Common myeloid progenitor, CD34-positive (primary cell): ENCODE measurements at regions of chr10 and their contacts with region 1.

Region 1: DNA sequence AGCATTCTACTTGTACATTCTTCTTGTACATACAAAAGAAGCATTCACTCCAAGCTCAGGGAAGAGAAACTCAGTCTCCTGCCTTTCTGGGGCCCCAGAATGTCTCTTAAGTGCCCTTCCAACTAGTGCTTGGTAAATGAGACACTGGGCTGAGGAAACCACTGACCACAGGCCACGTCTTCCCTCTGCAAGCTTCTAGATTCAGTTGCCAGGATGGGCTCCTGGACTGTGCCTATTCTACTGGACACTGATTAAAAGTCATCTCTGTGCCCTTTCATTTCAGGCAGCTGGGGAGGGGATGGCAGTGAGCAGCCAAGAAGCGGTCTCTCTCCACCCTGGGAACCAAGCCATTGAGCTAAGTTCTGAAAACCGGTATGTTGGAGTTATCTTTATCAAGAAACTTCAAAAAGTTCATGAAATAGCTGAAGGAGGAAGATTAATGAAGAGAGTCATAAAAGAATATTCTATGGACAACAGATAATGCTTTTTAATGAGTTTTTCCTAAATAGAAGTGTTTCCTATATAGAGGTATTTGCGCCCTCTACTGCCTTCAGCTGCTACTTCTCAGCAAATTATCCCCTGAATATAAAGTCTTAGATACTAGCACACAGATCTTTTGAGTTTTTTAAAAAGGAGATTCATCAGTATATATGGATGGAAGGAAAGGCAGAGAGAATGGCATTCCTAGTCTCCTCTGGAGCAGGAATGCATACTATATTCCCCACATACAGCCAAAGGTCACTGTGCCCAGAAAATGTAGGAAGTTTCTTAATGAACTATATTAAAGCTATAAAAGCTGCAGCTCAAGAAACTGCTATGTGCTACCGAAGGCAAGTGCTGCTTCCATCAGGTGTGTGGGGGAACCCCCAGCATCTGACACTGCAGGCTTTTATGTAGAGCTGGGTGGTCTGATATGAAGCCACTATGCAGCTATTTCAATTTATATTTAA is 8.4 kb upstream of the IFIT1B start:
- DNase-seq: peak in 2 of 3 donors; percentile 54 to 55
- H3K4me3 ChIP-seq: peak overlapping the region in 1 of 7 experiments; percentile 11
- H3K27ac ChIP-seq: no peak overlapping the region
- H3K4me1 ChIP-seq: peaks cover 10 to 41% (median 19%) of the 10 kb centered on the region in 4 experiments
- H3K27me3 ChIP-seq: no peaks in the 10 kb centered on the region

Region 2: GRCh38 chr10:89295597-89295996 is 73.8 kb before region 1 on chr10:
- CTCF ChIA-PET with region 1: interaction called, 14 read pairs
- POLR2A ChIA-PET with region 1: no interaction called
- DNase-seq: peak in 2 of 3 donors; percentile 52 to 61
- H3K4me3 ChIP-seq: peak overlapping the region in 3 of 7 experiments; percentile 10 to 36 (median 19)
- H3K27ac ChIP-seq: peak overlapping the region in 1 of 2 experiments; percentile 66
- H3K4me1 ChIP-seq: peaks cover 10 to 30% (median 17%) of the 10 kb centered on the region in 4 experiments
- H3K27me3 ChIP-seq: no peaks in the 10 kb centered on the region

Region 3: GRCh38 chr10:89301721-89302445 is 67.5 kb before region 1 on chr10 and contains the start of gene IFIT2:
- CTCF ChIA-PET with region 1: interaction called, 18 read pairs
- POLR2A ChIA-PET with region 1: no interaction called
- DNase-seq: peak; percentile 80 to 93 (median 93)
- H3K4me3 ChIP-seq: peak within 1 kb of the TSS in 6 of 7 experiments; percentile 66 to 95 (median 80)
- H3K27ac ChIP-seq: peak within 1 kb of the TSS; percentile 62 to 89
- H3K4me1 ChIP-seq: peaks cover 16 to 42% (median 27%) of the 10 kb centered on the region in 4 experiments
- H3K27me3 ChIP-seq: no peaks in the 10 kb centered on the region

Region 4: GRCh38 chr10:89346264-89347254 is 22.9 kb before region 1 on chr10:
- CTCF ChIA-PET with region 1: interaction called, 12 read pairs
- POLR2A ChIA-PET with region 1: interaction called, 4 read pairs
- DNase-seq: peak in 1 of 3 donors; percentile 27
- H3K4me3 ChIP-seq: no peak overlapping the region
- H3K27ac ChIP-seq: no peak overlapping the region
- H3K4me1 ChIP-seq: peaks cover 6 to 30% (median 14%) of the 10 kb centered on the region in 4 experiments
- H3K27me3 ChIP-seq: no peaks in the 10 kb centered on the region

Region 5: GRCh38 chr10:89351780-89352597 is 17.4 kb before region 1 on chr10:
- CTCF ChIA-PET with region 1: interaction called, 24 read pairs
- POLR2A ChIA-PET with region 1: interaction called, 4 read pairs
- DNase-seq: no peak
- H3K4me3 ChIP-seq: no peak overlapping the region
- H3K27ac ChIP-seq: no peak overlapping the region
- H3K4me1 ChIP-seq: peaks cover 2 to 30% (median 20%) of the 10 kb centered on the region in 4 experiments
- H3K27me3 ChIP-seq: no peaks in the 10 kb centered on the region

Region 6: GRCh38 chr10:89384474-89385340 is 15.3 kb after region 1 on chr10:
- CTCF ChIA-PET with region 1: interaction called, 35 read pairs
- POLR2A ChIA-PET with region 1: no interaction called
- DNase-seq: peak; percentile 79 to 92 (median 89)
- H3K4me3 ChIP-seq: peak overlapping the region in 4 of 7 experiments; percentile 32 to 53 (median 42)
- H3K27ac ChIP-seq: no peak overlapping the region
- H3K4me1 ChIP-seq: peaks cover 14 to 34% (median 27%) of the 10 kb centered on the region in 4 experiments
- H3K27me3 ChIP-seq: no peaks in the 10 kb centered on the region

Region 7: DNA sequence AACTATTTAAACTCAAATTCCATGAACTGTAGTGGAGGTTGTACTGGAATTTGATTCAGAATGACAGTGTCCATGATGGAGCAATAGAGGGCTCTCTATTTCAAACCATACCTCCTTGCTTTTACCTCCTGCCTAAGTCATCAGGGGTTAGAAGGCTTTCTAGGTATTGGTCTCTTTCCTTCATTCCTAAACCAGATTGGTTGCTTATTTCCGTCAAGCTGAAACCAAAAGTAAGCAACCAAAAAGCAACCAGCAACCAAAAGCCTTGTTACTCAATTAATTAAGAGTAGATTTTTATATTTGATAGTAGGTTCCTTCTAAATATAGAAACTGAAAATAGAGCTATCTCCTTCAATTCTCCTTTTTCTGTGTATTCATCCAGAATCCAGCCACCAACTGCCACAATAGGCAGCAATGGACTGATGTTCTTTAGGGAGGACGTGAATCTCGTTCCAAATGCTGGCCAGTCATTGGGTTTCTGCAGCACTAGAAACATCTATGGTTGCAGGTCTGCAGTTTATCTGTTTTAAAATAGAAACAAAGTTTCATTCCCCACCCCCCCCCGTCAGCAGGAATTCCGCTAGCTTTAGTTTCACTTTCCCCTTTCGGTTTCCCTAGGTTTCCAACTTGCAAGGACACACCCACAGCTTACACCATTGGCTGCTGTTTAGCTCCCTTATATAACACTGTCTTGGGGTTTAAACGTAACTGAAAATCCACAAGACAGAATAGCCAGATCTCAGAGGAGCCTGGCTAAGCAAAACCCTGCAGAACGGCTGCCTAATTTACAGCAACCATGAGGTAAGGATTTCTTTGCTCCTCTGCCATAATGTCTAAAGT is 22.7 kb after region 1 on chr10 and contains the start of gene IFIT1:
- CTCF ChIA-PET with region 1: interaction called, 35 read pairs
- POLR2A ChIA-PET with region 1: no interaction called
- DNase-seq: peak; percentile 87 to 96 (median 94)
- H3K4me3 ChIP-seq: peak within 1 kb of the TSS in 6 of 7 experiments; percentile 74 to 95 (median 90)
- H3K27ac ChIP-seq: peak within 1 kb of the TSS; percentile 77 to 80
- H3K4me1 ChIP-seq: peaks cover 18 to 36% (median 21%) of the 10 kb centered on the region in 4 experiments
- H3K27me3 ChIP-seq: no peaks in the 10 kb centered on the region

Region 8: GRCh38 chr10:89404104-89405047 is 34.9 kb after region 1 on chr10:
- CTCF ChIA-PET with region 1: no interaction called
- POLR2A ChIA-PET with region 1: no interaction called
- DNase-seq: no peak
- H3K4me3 ChIP-seq: no peak overlapping the region
- H3K27ac ChIP-seq: no peak overlapping the region
- H3K4me1 ChIP-seq: no peaks in the 10 kb centered on the region
- H3K27me3 ChIP-seq: no peaks in the 10 kb centered on the region